Colonic mucosa (tissue), 4 donors: ENCODE measurements at regions of chr19 and their contacts with region 1.

Region 1: DNA sequence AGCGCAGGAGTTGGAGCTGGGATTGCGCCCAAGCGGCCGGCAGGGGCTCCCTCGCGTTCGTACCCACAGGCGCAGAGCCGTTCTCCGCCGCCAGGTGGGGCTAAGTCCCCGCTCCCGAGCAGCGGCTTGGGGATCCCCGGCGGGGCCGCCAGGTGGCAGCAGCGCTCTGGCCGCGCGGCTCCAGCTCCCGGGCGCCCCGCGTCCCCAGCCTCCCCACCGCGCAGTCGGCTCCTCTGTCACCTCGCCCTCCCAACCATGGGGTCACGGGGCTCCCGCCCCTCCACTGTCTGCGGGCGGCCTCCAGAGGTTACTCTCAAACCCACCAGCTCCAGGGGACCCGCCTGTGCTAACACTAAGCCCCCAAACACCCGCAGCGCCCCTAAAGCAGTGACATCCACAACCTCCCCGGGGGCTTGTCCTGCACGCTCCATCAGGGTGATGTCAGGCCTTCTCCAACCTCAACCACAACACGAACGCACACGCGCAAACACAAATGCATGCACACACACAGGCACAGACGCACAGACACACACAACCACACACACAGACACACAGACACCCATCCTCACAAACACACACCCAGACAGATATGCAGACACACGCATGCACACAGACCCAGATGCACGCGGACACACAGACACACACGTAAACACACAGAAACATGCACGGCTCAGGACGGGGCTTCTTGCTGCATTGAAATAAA is 18.4 kb upstream of the KCTD15 start:
- DNase-seq: peak; percentile 82
- H3K4me3 ChIP-seq: no peak overlapping the region
- H3K27ac ChIP-seq: no peak overlapping the region
- H3K4me1 ChIP-seq: no peaks in the 10 kb centered on the region
- H3K27me3 ChIP-seq: no peaks in the 10 kb centered on the region
- CTCF ChIP-seq: peak; percentile 100

Region 2: DNA sequence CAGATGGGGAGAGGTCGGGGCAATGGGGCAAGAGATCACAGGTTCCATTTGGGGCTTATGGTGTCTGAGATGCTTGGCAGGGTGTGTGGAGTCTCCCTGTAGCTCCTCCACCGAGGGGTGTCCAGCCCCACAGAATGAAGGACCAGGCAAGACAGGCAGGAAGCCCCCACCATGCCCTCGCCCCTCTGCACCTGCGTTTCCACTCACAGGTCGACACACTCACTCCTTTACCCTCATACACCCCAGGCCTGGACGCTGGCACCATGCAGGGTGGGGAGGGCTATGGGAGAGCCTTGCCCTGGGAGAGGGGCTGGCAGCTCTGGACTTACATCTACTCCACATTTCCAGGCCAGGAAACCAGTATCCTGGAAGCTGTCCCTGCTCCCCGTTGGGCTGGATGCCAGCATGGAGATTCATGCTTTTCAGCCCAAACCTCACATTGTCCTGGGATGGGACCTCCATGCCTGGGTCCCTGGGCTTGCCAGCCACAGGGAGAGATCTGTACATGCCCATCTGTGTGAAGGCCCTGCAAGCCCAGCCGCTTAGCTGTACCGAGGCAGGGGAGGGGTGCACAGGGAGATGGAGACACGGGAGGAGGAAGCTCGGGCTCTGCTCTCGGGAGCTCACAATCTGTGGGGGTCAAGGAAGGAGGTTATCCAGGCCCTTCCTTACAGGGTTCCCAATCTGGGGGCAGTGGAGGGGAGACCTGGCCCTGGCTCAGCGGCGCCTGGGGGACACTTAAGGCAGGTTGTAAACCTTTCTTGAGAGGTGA is 79.4 kb before region 1 on chr19:
- intact Hi-C with region 1: no loop called
- DNase-seq: no peak
- H3K4me3 ChIP-seq: no peak overlapping the region
- H3K27ac ChIP-seq: no peak overlapping the region
- H3K4me1 ChIP-seq: no peaks in the 10 kb centered on the region
- H3K27me3 ChIP-seq: no peaks in the 10 kb centered on the region
- CTCF ChIP-seq: no peak

Region 3: GRCh38 chr19:33998739-33999345 is 220.6 kb after region 1 on chr19:
- intact Hi-C with region 1: loop called (anchors 5 kb)
- DNase-seq: no peak
- H3K4me3 ChIP-seq: no peak overlapping the region
- H3K27ac ChIP-seq: no peak overlapping the region
- H3K4me1 ChIP-seq: no peaks in the 10 kb centered on the region
- H3K27me3 ChIP-seq: no peaks in the 10 kb centered on the region
- CTCF ChIP-seq: peak; percentile 23

Region 4: GRCh38 chr19:34096020-34096915 is 318.0 kb after region 1 on chr19:
- intact Hi-C with region 1: loop called (anchors 2 kb)
- DNase-seq: no peak
- H3K4me3 ChIP-seq: no peak overlapping the region
- H3K27ac ChIP-seq: no peak overlapping the region
- H3K4me1 ChIP-seq: no peaks in the 10 kb centered on the region
- H3K27me3 ChIP-seq: no peaks in the 10 kb centered on the region
- CTCF ChIP-seq: peak; percentile 52

Region 5: GRCh38 chr19:34145741-34146202 is 367.5 kb after region 1 on chr19:
- intact Hi-C with region 1: loop called (anchors 5 kb)
- DNase-seq: peak; percentile 45
- H3K4me3 ChIP-seq: no peak overlapping the region
- H3K27ac ChIP-seq: no peak overlapping the region
- H3K4me1 ChIP-seq: no peaks in the 10 kb centered on the region
- H3K27me3 ChIP-seq: no peaks in the 10 kb centered on the region
- CTCF ChIP-seq: peak; percentile 75